ENCODE measurements at regions of chr10 and their contacts with region 1.

Region 1: DNA sequence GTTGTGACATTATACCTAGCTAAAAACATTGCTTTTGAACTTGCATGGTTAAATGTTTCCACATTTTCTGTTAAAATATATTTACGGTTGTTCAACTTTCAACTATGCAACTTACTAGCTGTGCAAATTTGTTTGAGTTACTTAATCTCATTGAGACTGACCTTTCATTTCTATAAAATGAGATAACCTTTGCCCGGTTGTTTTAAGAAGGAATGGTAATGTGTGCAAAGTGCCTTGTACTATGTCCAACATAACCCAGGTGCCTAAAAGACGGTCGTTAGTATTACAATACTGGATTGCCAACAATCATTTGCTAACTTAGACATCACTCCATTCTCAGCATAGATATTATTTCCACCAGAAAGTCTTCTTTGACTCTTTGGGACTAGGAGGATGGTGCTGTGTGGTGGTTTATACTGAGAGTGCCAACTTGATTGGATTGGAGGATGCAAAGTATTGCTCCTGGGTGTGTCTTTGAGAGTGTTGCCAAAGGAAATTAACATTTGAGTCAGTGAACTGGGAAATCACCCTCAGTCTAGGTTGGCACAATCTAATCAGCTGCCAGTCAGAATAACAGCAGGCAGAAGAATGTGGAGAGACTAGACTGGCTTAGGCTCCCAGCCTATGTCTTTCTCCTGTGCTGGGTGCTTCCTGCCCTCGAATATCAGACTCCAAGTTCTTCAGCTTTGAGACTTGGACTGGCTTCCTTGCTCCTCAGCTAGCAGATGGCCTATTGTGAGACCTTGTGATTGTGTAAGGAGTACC is 85.2 kb upstream of the PDSS1 start:
- H3K4me3 Mint-ChIP-seq: no peak overlapping the region
- H3K27ac Mint-ChIP-seq: no peak overlapping the region
- H3K4me1 Mint-ChIP-seq: peaks cover 8% of the 10 kb centered on the region
- H3K27me3 Mint-ChIP-seq: peaks cover 3% of the 10 kb centered on the region

Region 2: DNA sequence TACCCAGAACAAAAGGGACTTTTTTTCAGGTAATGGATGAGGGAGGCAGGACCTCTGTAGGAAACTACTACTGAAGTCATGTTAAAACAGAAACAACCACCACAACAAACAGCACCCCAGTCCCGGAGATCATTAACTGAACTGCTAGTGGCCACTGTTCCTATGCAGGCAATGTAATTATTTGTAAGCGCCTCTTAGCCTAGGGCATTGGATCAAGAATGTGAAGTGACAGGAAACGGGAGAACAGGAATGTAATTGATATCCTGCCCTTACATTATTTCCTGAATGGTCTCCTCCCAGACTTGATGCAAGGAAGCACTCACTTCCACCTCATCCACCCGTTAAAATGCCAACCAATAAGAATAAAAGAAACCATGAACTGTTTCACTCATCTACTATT is 412.5 kb before region 1 on chr10:
- intact Hi-C with region 1: no loop called
- H3K4me3 Mint-ChIP-seq: no peak overlapping the region
- H3K27ac Mint-ChIP-seq: no peak overlapping the region
- H3K4me1 Mint-ChIP-seq: no peaks in the 10 kb centered on the region
- H3K27me3 Mint-ChIP-seq: peaks cover 10% of the 10 kb centered on the region

Region 3: DNA sequence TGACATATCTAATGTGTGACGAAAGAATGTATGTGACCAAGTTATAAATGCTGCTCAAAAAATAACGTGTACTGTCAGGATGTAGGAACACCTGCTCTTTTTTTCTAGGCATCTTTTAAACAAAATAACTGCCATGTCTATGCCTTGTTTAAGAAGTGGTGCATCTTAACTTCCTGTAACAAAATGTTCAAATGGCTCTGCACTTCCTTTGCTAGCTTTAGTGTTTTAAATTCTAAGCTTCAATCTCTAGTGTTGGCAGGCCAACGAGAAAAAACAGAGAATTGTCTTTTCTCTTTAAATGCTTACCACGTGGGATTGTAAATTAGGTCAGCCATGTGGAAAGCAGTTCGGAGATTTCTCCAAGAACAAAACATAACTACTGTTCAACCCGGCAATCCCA is 70.6 kb after region 1 on chr10:
- intact Hi-C with region 1: loop called (anchors 5 kb)
- H3K4me3 Mint-ChIP-seq: no peak overlapping the region
- H3K27ac Mint-ChIP-seq: no peak overlapping the region
- H3K4me1 Mint-ChIP-seq: peaks cover 27% of the 10 kb centered on the region
- H3K27me3 Mint-ChIP-seq: no peaks in the 10 kb centered on the region

Region 4: GRCh38 chr10:26737730-26738129 is 125.4 kb after region 1 on chr10:
- intact Hi-C with region 1: no loop called
- H3K4me3 Mint-ChIP-seq: no peak overlapping the region
- H3K27ac Mint-ChIP-seq: peak overlapping the region; percentile 89
- H3K4me1 Mint-ChIP-seq: peaks cover 42% of the 10 kb centered on the region
- H3K27me3 Mint-ChIP-seq: no peaks in the 10 kb centered on the region

Region 5: GRCh38 chr10:26881600-26882331 is 269.4 kb after region 1 on chr10:
- intact Hi-C with region 1: loop called (anchors 5 kb)
- H3K4me3 Mint-ChIP-seq: no peak overlapping the region
- H3K27ac Mint-ChIP-seq: no peak overlapping the region
- H3K4me1 Mint-ChIP-seq: peaks cover 5% of the 10 kb centered on the region
- H3K27me3 Mint-ChIP-seq: peaks cover 12% of the 10 kb centered on the region

Measured in dendritic cell treated with granulocyte-macrophage colony-stimulating factor and Interleukin-4, amounts not matched to agents 40 ng/mL and 50 ng/mL, for 4 days (primary cell).